ENCODE measurements at regions of chrX and their contacts with region 1.

Region 1: GRCh38 chrX:151715752-151716151 is at the start of gene FATE1:
- DNase-seq: no peak
- H3K4me3 ChIP-seq: no peak within 1 kb of the TSS
- H3K27ac ChIP-seq: no peak within 1 kb of the TSS
- H3K4me1 ChIP-seq: no peaks in the 10 kb centered on the region
- H3K27me3 ChIP-seq: no peaks in the 10 kb centered on the region
- CTCF ChIP-seq: no peak
- EP300 ChIP-seq: no peak
- POLR2A ChIP-seq: no peak
- total RNA-seq, gene FATE1: not detected

Region 2: GRCh38 chrX:151323054-151323453 is 392.7 kb before region 1 on chrX:
- intact Hi-C with region 1: no loop called
- DNase-seq: no peak
- H3K4me3 ChIP-seq: no peak overlapping the region
- H3K27ac ChIP-seq: no peak overlapping the region
- H3K4me1 ChIP-seq: no peaks in the 10 kb centered on the region
- H3K27me3 ChIP-seq: no peaks in the 10 kb centered on the region
- CTCF ChIP-seq: no peak
- EP300 ChIP-seq: no peak
- POLR2A ChIP-seq: no peak

Region 3: GRCh38 chrX:151336809-151337208 is 378.9 kb before region 1 on chrX:
- intact Hi-C with region 1: loop called in 1 of 4 experiments (anchors 5 kb)
- DNase-seq: no peak
- H3K4me3 ChIP-seq: no peak overlapping the region
- H3K27ac ChIP-seq: no peak overlapping the region
- H3K4me1 ChIP-seq: no peaks in the 10 kb centered on the region
- H3K27me3 ChIP-seq: no peaks in the 10 kb centered on the region
- CTCF ChIP-seq: no peak
- EP300 ChIP-seq: no peak
- POLR2A ChIP-seq: no peak

Region 4: DNA sequence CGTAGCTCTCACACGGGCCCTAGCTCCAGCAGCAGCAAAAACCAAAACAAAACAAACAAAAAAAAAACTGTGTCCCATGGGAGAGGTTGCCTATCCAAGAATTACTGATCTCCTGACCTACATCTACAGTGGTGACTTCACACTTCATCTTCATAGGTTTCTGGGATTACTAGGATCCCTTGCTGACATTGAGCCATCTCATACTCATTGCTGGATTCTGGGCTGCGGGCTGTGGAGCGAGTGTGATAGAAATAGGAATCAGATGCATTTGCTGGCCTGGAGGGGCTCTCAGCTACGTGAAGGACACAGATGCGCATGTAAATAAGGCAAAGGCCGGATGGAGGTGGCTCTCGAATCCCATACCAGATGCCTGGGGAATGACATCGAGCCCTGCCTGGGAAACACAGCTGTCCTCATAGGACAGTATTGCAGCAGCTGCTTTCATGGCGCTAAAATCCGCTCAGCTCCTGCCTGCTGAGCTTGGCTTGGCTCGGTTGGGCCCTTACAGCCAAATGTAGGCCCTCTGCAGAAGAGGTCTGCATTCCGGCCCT is 60.5 kb after region 1 on chrX:
- intact Hi-C with region 1: no loop called
- DNase-seq: no peak
- H3K4me3 ChIP-seq: no peak overlapping the region
- H3K27ac ChIP-seq: no peak overlapping the region
- H3K4me1 ChIP-seq: no peaks in the 10 kb centered on the region
- H3K27me3 ChIP-seq: no peaks in the 10 kb centered on the region
- CTCF ChIP-seq: no peak
- EP300 ChIP-seq: no peak
- POLR2A ChIP-seq: no peak

Measured in ovary (tissue), 10 donors.